ENCODE measurements at regions of chr1 and their contacts with region 1.

Region 1: DNA sequence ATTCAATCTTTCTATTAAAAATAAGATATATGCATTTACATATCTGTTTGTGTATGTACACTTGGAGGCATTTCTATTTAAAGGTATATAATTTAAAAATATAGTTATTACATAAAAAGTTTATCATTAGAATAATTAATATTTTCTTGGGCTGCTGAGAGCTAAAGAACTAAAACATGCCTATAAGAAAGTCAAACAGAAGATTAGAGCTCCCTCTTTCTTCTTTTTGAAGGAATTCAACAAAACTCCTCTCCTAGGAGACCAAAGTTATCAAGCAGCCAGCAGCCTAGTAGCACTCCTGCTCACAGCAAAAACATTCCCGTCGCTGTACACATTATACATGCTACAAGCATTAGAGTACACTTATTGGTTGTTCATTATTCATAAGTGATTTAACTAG is 216.4 kb downstream of the VAV3 start:
- DNase-seq: no peak
- ATAC-seq: no peak
- H3K4me3 ChIP-seq: no peak overlapping the region
- H3K27ac ChIP-seq: no peak overlapping the region
- H3K4me1 ChIP-seq: no peaks in the 10 kb centered on the region
- H3K27me3 ChIP-seq: no peaks in the 10 kb centered on the region
- CTCF ChIP-seq: peak in 4 of 9 donors; percentile 8 to 25 (median 21)

Region 2: GRCh38 chr1:107277022-107277421 is 471.5 kb before region 1 on chr1:
- intact Hi-C with region 1: no loop called
- DNase-seq: peak in 1 of 2 donors; percentile 5
- ATAC-seq: no peak
- H3K4me3 ChIP-seq: no peak overlapping the region
- H3K27ac ChIP-seq: no peak overlapping the region
- H3K4me1 ChIP-seq: no peaks in the 10 kb centered on the region
- H3K27me3 ChIP-seq: no peaks in the 10 kb centered on the region
- CTCF ChIP-seq: peak in 7 of 9 donors; percentile 21 to 49 (median 33)

Region 3: GRCh38 chr1:107430540-107431228 is 317.8 kb before region 1 on chr1:
- intact Hi-C with region 1: loop called in 2 of 10 experiments (anchors 5 to 10 kb)
- DNase-seq: peak in 1 of 2 donors; percentile 12
- ATAC-seq: no peak
- H3K4me3 ChIP-seq: no peak overlapping the region
- H3K27ac ChIP-seq: no peak overlapping the region
- H3K4me1 ChIP-seq: no peaks in the 10 kb centered on the region
- H3K27me3 ChIP-seq: peaks cover 0 to 12% (median 0%) of the 10 kb centered on the region in 7 donors
- CTCF ChIP-seq: peak; percentile 15 to 68 (median 51)

Measured in heart right ventricle (tissue), 16 donors.